ENCODE measurements at regions of chr11 and their contacts with region 1.

Region 1: DNA sequence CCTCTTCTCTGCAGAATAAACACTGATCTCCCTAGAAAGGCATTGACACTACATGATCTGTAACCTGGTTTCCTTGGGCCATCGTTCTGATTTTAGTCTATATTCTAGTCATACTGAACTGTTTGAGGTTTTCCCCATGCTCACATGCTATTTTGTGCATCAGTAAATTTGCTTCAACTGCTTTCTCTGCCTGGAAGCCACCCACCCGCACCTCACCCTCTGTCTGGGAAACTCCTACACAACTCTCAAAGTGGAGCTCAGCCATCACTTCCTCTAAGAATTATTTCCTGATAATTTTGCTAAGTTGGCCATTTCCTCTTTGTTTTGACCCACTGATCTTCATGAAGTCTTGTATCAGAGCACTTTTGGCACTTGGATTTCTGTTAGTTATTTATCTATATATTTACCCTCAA is 36.1 kb downstream of the MMP20 start:
- DNase-seq: peak; percentile 67
- H3K4me3 Mint-ChIP-seq: peak overlapping the region; percentile 0
- H3K27ac Mint-ChIP-seq: peak overlapping the region; percentile 42
- H3K4me1 Mint-ChIP-seq: peaks cover 26% of the 10 kb centered on the region
- H3K27me3 Mint-ChIP-seq: no peaks in the 10 kb centered on the region

Region 2: GRCh38 chr11:102317099-102317767 is 271.8 kb before region 1 on chr11 and contains the start of gene BIRC3:
- intact Hi-C with region 1: no loop called
- DNase-seq: peak; percentile 97
- H3K4me3 Mint-ChIP-seq: peak within 1 kb of the TSS; percentile 91
- H3K27ac Mint-ChIP-seq: peak within 1 kb of the TSS; percentile 93
- H3K4me1 Mint-ChIP-seq: peaks cover 64% of the 10 kb centered on the region
- H3K27me3 Mint-ChIP-seq: peaks cover 2% of the 10 kb centered on the region
- total RNA-seq, gene BIRC3: 100 and 102 TPM in 2 replicates

Region 3: GRCh38 chr11:102513869-102514268 is 75.2 kb before region 1 on chr11:
- intact Hi-C with region 1: no loop called
- DNase-seq: no peak
- H3K4me3 Mint-ChIP-seq: no peak overlapping the region
- H3K27ac Mint-ChIP-seq: no peak overlapping the region
- H3K4me1 Mint-ChIP-seq: no peaks in the 10 kb centered on the region
- H3K27me3 Mint-ChIP-seq: peaks cover 6% of the 10 kb centered on the region

Region 4: DNA sequence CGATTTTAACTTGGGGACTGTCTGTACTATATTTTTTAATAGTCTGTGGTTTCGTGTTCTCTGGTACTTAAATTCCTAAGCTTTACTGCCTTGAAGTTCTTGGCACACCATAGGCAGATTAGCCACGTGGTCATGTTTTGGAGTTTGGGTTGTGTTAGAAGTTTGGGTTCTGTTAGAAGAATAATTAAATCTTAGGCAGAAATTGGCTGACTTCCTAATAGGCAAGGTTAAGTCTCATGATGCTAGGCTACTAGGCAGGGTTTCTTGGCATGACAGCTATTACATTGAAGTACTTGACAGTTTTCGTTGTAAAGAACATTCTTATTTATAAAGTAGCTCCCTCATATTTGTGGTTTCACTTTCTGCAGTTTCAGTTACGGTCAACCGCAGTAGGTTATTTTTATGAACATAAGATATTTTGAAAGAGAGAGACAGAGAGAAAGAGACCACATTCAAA is 28.5 kb before region 1 on chr11:
- intact Hi-C with region 1: loop called (anchors 1 kb)
- DNase-seq: peak; percentile 73
- H3K4me3 Mint-ChIP-seq: peak overlapping the region; percentile 52
- H3K27ac Mint-ChIP-seq: peak overlapping the region; percentile 78
- H3K4me1 Mint-ChIP-seq: peaks cover 39% of the 10 kb centered on the region
- H3K27me3 Mint-ChIP-seq: peaks cover 2% of the 10 kb centered on the region